A549 (cell line): ENCODE measurements at regions of chr2 and their contacts with region 1.

Region 1: DNA sequence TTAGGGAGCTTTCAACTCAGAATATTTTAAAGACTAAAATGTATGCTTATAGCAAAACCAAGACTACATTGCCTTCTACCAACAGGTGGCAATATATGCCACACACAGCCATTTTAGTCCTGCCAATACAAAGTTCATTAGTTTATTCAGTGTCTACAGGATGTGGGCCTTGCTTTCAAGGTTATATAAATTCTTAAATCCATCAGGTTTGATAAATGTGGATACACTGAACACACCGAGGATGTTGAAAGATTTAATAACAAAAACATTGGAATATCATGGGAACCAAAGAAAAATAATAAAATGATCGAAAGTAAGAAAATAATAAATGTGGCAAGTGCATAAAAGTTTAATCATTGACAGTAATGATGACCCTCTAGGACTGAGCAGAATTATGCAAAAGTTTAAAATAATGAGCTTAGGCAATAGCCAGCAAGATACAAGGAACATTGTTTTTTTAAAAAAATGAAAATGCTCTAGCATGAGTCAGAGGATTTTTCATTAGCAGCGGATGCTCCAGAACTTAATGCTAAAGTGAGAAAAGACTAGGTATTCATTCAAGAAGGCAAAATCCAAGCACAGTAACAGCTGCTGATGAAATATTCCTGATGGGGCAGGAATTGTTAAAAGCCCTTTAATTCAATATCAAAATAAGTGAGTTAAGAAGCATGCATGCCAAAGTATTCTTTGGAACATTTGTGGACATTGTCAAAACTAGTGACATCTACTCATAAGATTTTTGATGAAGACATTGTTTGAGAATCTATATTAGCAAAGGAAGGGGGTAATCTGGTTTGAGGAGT is 14.2 kb downstream of the SCN9A start:
- DNase-seq: peak in 1 of 2 experiments; percentile 72
- ATAC-seq: peak; percentile 84 to 88
- H3K4me3 ChIP-seq: no peak overlapping the region
- H3K27ac ChIP-seq: peak overlapping the region; percentile 68 to 72
- H3K4me1 ChIP-seq: peaks cover 43% of the 10 kb centered on the region
- CTCF ChIP-seq: peak; percentile 72
- EP300 ChIP-seq: no peak
- POLR2A ChIP-seq: no peak
- RAD21 ChIP-seq: peak; percentile 74 to 75

Region 2: DNA sequence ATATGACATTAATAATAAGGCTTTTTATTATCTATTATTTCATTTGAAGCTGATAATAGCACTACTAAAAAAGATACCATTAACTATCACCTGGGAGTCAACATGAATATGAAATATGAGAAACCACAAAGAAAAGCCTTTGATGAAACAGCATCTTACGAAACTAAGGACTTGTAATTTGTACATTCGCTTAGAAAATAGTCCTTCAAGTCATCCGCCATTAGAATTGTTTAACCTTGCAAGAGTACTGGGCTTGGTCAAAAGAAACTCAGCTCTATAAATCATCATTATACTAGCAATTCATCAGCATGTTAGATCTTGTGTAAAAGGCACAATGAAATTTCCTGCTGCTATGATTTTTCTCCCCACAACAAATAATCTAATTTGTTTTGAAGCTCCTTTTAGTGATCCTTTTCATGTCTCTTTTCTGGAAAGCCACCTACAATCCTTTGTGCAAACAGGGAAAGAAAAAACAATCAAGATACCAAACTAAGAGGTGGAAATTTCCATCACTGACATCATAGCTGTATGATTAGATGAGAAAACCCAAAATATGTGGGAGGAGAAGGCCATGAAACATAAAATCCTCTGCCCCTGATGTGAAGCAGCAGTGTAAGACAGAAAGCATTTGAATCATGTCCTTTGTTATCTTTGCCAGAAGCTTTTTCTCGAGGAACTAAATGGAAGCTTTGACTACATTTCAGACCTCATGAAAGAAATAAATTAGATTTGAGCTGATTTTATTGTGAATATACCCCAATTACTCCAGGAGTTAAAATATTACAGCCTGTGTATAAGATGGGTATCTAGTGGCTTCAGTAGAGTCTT is 17.1 kb before region 1 on chr2:
- CTCF ChIA-PET with region 1: interaction called, 22 read pairs
- POLR2A ChIA-PET with region 1: no interaction called
- DNase-seq: no peak
- ATAC-seq: no peak
- H3K4me3 ChIP-seq: no peak overlapping the region
- H3K27ac ChIP-seq: peak overlapping the region in 1 of 2 experiments; percentile 45; a peak in 2 of 6 replicates
- H3K4me1 ChIP-seq: peaks cover 29% of the 10 kb centered on the region
- CTCF ChIP-seq: no peak
- EP300 ChIP-seq: no peak
- POLR2A ChIP-seq: no peak
- RAD21 ChIP-seq: no peak

Region 3: GRCh38 chr2:166351319-166351718 is 10.2 kb before region 1 on chr2:
- CTCF ChIA-PET with region 1: interaction called, 22 read pairs
- POLR2A ChIA-PET with region 1: no interaction called
- DNase-seq: no peak
- ATAC-seq: no peak
- H3K4me3 ChIP-seq: no peak overlapping the region
- H3K27ac ChIP-seq: no peak overlapping the region
- H3K4me1 ChIP-seq: peaks cover 15% of the 10 kb centered on the region
- CTCF ChIP-seq: no peak
- EP300 ChIP-seq: no peak
- POLR2A ChIP-seq: no peak
- RAD21 ChIP-seq: no peak

Region 4: GRCh38 chr2:166375736-166376487 is 14.4 kb after region 1 on chr2 and contains the start of gene SCN9A:
- CTCF ChIA-PET with region 1: interaction called, 25 read pairs
- POLR2A ChIA-PET with region 1: interaction called, 13 read pairs
- DNase-seq: peak; percentile 49 to 92
- ATAC-seq: peak; percentile 90 to 92
- H3K4me3 ChIP-seq: peak within 1 kb of the TSS; percentile 63
- H3K27ac ChIP-seq: peak within 1 kb of the TSS; percentile 84 to 88
- H3K4me1 ChIP-seq: peaks cover 34% of the 10 kb centered on the region
- CTCF ChIP-seq: no peak
- EP300 ChIP-seq: no peak
- POLR2A ChIP-seq: peak; percentile 53; the same call in 1 of the 2 replicates
- RAD21 ChIP-seq: no peak; a peak in 2 of 5 replicates
- polyA plus RNA-seq, gene SCN9A: 19.6 and 23.6 TPM in 2 replicates

Region 5: DNA sequence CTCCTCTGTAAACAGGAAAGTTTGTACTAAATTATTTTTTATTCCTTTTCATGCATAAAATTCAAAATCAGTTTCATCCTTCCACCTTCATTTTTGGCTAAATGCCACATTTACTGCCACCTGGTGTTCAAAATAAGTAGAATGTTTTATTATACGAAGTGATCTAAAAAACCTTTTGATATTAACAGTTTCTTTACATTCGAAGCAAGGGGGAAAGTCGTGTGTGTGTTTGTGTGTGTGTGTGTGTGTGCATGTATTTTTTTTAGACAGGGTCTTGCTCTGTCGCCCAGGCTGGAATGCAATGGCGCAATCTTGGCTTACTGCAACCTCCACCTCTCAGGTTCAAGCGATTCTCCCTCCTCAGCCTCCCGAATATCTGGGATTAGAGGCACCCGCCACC is 23.2 kb after region 1 on chr2:
- CTCF ChIA-PET with region 1: interaction called, 20 read pairs
- POLR2A ChIA-PET with region 1: no interaction called
- DNase-seq: peak in 1 of 2 experiments; percentile 36
- ATAC-seq: peak in 1 of 2 experiments; percentile 59; a peak in 3 of 6 replicates
- H3K4me3 ChIP-seq: no peak overlapping the region
- H3K27ac ChIP-seq: no peak overlapping the region
- H3K4me1 ChIP-seq: 0 out of 3 replicates have a peak, but pooled peaks cover 2% of the 10 kb centered on the region
- CTCF ChIP-seq: peak; percentile 77
- EP300 ChIP-seq: no peak
- POLR2A ChIP-seq: no peak
- RAD21 ChIP-seq: peak; percentile 36 to 52

Region 6: GRCh38 chr2:166419616-166419934 is 58.0 kb after region 1 on chr2:
- CTCF ChIA-PET with region 1: interaction called, 13 read pairs
- POLR2A ChIA-PET with region 1: no interaction called
- DNase-seq: peak in 1 of 2 experiments; percentile 58
- ATAC-seq: peak; percentile 80 to 87; a peak in 5 of 6 replicates
- H3K4me3 ChIP-seq: no peak overlapping the region
- H3K27ac ChIP-seq: no peak overlapping the region
- H3K4me1 ChIP-seq: 0 out of 3 replicates have a peak, but pooled peaks cover 4% of the 10 kb centered on the region
- CTCF ChIP-seq: peak; percentile 77
- EP300 ChIP-seq: no peak
- POLR2A ChIP-seq: no peak
- RAD21 ChIP-seq: peak; percentile 85 to 88